ENCODE measurements at regions of chr5 and their contacts with region 1.

Region 1: GRCh38 chr5:82312373-82312856 is 34.3 kb upstream of the RPS23 start:
- DNase-seq: peak; percentile 67

Region 2: DNA sequence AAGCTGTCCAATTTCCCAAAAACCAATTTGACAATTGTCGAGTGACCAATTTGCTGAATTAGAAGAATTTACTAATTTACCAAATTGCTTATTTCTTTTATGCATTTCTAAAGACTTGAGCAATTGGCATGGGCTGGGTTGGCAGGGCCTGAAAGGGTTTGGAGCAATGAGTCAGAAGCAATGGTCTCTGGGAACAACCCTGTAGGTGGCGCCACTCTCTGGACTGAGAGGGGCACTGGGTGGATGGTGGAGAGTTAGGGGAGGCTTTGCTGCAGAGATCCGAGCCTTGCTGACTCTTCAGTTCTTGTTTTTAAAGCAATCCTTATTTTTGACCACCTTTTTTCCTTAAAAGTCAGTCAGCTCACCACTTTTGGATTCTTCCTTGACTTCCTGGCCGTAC is 37.2 kb after region 1 on chr5:
- CTCF ChIA-PET with region 1: interaction called, 10 read pairs
- POLR2A ChIA-PET with region 1: no interaction called
- DNase-seq: peak; percentile 60

Measured in HEK293T (cell line).